ENCODE measurements at regions of chr17 and their contacts with region 1.

Region 1: DNA sequence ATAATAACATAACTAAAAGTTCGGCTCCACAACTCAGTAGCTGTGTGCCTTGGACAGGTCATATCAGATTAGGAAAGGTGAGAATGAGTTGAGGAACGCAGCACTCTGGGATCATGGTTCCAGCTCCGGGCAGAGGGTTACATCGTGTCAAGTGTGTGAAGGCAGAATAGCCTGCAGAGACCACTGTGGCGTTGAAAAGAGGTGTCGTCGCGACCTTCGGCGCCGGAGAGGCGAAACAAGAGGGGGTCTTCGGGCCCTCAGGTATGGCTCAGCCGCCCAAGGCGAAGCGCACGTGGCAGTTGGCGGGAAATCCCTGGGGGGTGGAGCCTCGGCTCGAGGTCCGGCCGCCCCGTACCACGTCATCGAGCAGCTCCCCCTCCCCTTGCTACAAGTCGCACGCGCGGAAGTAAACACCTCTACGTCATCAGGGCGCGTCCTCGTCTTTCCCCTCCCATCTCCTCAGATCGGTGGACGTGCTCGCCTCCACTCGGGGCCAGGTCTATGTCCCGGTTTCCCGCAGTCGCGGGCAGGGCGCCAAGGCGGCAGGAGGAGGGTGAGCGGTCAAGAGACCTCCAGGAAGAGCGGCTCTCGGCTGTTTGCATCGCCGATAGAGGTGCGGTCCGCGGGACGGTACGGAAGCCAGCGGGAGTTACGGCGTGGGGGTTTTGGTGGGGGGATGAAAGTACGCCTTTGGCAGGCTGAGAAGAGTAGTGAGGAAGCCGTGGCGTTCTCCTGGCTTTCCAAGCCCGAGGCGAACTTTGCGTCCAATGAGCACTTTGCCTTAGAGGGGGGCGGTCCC is at the start of gene DHX40:
- DNase-seq: peak; percentile 98
- H3K4me3 ChIP-seq: peak within 1 kb of the TSS; percentile 77 to 98 (median 84)
- H3K27ac ChIP-seq: peak within 1 kb of the TSS; percentile 84 to 92 (median 86)
- H3K4me1 ChIP-seq: peaks cover 0 to 12% (median 12%) of the 10 kb centered on the region in 4 donors
- H3K27me3 ChIP-seq: no peaks in the 10 kb centered on the region
- CTCF ChIP-seq: no peak
- EP300 ChIP-seq: peak in 2 of 4 donors; percentile 38 to 63
- POLR2A ChIP-seq: peak in 1 of 2 donors; percentile 25
- total RNA-seq, gene DHX40: 36.8 to 53.2 (median 41.3) TPM

Region 2: GRCh38 chr17:59547131-59547915 is 18.0 kb before region 1 on chr17:
- intact Hi-C with region 1: no loop called
- DNase-seq: no peak
- H3K4me3 ChIP-seq: no peak overlapping the region
- H3K27ac ChIP-seq: no peak overlapping the region
- H3K4me1 ChIP-seq: no peaks in the 10 kb centered on the region
- H3K27me3 ChIP-seq: no peaks in the 10 kb centered on the region
- CTCF ChIP-seq: no peak
- EP300 ChIP-seq: no peak
- POLR2A ChIP-seq: no peak

Region 3: GRCh38 chr17:59619293-59620063 is 54.1 kb after region 1 on chr17 and contains the start of gene CLTC:
- intact Hi-C with region 1: loop called (anchors 5 kb)
- DNase-seq: peak; percentile 97
- H3K4me3 ChIP-seq: peak within 1 kb of the TSS; percentile 72 to 85 (median 85)
- H3K27ac ChIP-seq: peak within 1 kb of the TSS; percentile 95 to 98 (median 96)
- H3K4me1 ChIP-seq: peaks cover 0 to 50% (median 45%) of the 10 kb centered on the region in 4 donors
- H3K27me3 ChIP-seq: no peaks in the 10 kb centered on the region
- CTCF ChIP-seq: no peak
- EP300 ChIP-seq: peak; percentile 19 to 66 (median 54)
- POLR2A ChIP-seq: peak; percentile 90 to 93
- total RNA-seq, gene CLTC: 206 to 236 (median 214) TPM

Measured in sigmoid colon (tissue), 7 donors.